ENCODE measurements at regions of chr11 and their contacts with region 1.

Region 1: DNA sequence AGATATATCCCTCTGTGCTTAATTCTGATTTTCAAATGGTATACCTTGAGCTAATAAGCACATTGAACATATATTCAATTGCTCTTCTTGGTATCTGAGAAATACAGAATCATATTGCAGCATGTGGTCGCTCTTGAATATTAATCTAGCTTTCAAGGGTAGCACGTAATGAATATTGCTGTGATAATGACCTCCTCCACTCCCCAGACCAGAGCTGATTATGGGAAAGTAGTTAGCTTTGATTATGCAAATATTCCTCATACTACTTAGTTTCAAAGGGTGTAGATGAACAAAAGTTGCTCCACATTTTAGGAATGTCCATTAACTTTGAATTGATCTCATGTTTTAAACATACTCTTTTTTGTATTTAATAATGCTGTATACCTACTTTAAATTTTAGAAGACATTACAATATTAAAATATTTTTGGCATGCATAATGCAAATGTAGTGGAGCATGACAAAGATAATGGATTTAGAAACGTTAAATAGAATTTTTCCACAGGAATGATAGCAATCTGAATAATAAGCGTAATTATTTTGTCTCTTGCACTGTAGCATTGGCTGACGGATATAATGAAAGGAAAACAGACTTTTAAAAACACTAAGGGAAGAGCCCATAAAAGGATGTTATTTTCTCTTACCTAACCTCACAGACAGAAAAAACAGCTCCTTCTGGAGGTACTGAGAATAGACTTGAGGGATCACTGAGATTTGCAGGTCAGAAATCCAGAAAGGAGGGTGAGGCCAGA is 27.2 kb downstream of the KBTBD3 start:
- DNase-seq: no peak
- ATAC-seq: no peak
- H3K4me3 Mint-ChIP-seq: no peak overlapping the region
- H3K27ac Mint-ChIP-seq: no peak overlapping the region
- H3K4me1 Mint-ChIP-seq: no peaks in the 10 kb centered on the region
- H3K27me3 Mint-ChIP-seq: no peaks in the 10 kb centered on the region

Region 2: DNA sequence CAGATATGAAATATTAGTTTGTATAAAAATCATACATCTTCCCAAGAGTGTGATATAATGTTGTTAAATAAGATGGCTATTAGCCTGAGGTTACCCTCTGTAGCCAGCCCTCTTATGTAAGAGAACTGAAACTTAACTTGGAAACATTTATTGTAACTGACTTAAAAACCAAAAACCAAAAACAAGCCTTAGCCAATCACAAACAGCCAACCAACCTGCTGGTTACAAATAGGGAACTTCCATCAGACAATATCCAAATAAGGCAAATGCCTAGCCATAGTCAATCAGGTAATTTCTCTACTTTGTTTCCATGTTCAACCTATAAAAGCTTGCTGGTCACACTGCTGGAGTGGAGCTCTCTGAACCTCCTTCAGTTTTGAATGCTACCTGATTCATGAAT is 13.1 kb after region 1 on chr11:
- CTCF ChIA-PET with region 1: interaction called, 4 read pairs
- POLR2A ChIA-PET with region 1: no interaction called
- intact Hi-C with region 1: loop called in 1 of 2 experiments (anchors 1 kb)
- DNase-seq: no peak
- ATAC-seq: peak; percentile 64
- H3K4me3 Mint-ChIP-seq: no peak overlapping the region
- H3K27ac Mint-ChIP-seq: no peak overlapping the region
- H3K4me1 Mint-ChIP-seq: peaks cover 13% of the 10 kb centered on the region
- H3K27me3 Mint-ChIP-seq: no peaks in the 10 kb centered on the region